B cell (primary cell): ENCODE measurements at regions of chr5 and their contacts with region 1.

Region 1: DNA sequence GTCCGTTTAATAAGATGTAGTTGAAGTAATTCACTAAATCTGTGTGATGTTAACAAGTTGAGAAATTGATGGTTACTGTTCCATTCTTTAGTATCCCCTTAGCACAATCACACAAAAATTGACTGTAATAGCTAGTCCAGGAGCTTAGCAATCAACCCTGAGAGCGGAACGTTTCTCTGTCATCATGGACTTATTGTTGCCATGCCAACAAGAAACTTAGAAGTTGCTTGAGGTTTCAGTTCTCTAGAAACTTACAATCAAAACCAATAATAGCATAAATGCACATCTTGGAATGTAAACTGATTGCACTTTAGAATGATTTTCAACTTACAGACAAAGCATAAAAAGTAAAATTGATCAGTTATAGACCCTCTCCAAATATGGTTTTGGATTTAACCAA is 125.4 kb upstream of the ANKH start:
- DNase-seq: peak; percentile 85
- ATAC-seq: peak; percentile 69
- H3K4me3 ChIP-seq: no peak overlapping the region
- H3K4me3 Mint-ChIP-seq: peak overlapping the region; percentile 24
- H3K27ac ChIP-seq: peak overlapping the region; percentile 37 to 59
- H3K27ac Mint-ChIP-seq: peak overlapping the region; percentile 71
- H3K4me1 ChIP-seq: peaks cover 35 to 39% of the 10 kb centered on the region in 2 donors
- H3K4me1 Mint-ChIP-seq: peaks cover 63% of the 10 kb centered on the region
- H3K27me3 ChIP-seq: no peaks in the 10 kb centered on the region
- H3K27me3 Mint-ChIP-seq: no peaks in the 10 kb centered on the region
- CTCF ChIP-seq: no peak

Region 2: DNA sequence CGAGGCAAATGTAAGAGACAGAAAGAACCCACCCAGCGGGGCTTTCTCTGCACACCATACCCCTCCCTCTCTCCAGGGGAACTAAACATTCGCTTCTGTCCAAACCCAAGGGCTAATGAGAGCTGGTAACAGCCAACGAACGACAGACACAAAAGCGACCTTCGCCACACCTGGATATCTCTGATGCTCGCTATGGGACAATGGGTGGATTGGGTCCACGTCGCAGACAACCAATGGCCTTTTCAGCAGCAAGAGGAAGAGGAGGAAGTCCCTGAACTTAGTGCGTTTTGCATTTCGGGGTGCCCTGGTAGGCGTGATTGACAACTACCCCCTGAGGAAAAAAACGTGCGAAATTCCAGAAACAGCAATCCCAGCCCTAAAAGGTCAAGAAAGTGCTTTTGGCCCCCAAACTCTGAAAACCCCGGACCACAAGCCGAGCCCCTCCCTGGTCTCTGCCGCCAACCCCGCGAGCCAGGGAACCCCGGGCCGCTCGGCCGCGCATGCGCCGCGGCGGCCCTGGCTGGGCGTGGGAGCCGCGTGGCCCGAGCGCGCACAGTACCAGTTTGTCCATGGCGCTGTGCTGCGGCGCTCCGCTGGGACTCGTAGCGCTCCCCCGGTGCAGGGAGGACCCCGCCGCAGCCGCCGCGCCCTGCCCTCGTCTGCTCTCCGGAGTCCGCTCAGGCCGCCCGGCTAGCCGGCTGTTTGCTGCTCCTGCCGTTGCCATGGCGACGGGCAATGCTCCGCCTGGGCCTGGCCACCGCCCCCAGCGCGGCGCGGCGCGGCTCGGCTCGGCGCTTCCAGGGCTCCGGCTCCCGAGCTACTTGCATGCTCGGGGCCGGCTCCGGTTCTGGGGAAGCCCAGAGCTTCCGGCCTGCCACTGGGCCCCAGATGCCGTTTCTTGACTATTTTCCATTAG is 985.6 kb before region 1 on chr5:
- CTCF ChIA-PET with region 1: no interaction called
- POLR2A ChIA-PET with region 1: no interaction called
- intact Hi-C with region 1: loop called (anchors 5 kb)
- DNase-seq: peak; percentile 85
- ATAC-seq: peak; percentile 87
- H3K4me3 ChIP-seq: peak overlapping the region; percentile 61 to 81 (median 72)
- H3K4me3 Mint-ChIP-seq: peak overlapping the region; percentile 91
- H3K27ac ChIP-seq: peak overlapping the region in 1 of 2 donors; percentile 14
- H3K27ac Mint-ChIP-seq: peak overlapping the region; percentile 60
- H3K4me1 ChIP-seq: peaks cover 5 to 8% of the 10 kb centered on the region in 2 donors
- H3K4me1 Mint-ChIP-seq: peaks cover 9% of the 10 kb centered on the region
- H3K27me3 ChIP-seq: peaks cover 0 to 16% (median 4%) of the 10 kb centered on the region in 4 experiments
- H3K27me3 Mint-ChIP-seq: peaks cover 28% of the 10 kb centered on the region
- CTCF ChIP-seq: no peak

Region 3: DNA sequence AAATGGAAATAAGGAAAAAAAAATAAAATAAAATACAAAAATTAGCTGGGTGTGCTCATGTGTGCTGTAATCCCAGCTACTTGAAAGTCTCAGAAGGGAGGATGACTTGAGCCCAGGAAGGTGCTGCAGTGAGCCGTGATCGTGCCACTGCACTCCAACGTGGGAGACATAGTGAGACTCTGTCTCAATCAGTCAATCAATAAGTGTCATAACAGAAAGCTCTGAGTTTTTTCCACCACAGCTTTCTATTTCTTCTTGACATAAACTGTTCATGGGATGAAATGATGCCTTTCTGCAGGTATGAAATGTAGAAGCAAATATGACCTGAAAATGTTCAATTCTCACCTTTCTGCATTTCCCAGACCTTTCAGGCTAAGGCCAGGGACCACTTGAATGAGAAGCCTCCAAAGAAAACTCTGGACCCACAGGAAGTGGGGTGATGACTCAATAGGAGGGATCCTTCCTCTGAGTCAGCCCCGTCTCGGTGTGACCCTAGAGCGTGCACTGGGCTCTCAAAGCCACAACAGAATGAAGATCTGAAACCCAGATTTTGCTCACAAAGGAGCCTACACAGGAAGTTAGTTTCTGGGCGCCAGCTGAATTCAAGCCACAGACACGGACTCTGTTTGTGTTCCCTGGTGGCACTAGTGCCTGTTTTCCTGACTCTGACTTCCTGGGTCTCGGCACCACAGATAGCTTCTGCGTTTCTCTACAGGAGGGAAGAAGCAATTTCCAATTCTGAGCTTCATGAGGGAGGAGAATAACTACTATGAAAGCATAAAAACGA is 187.4 kb before region 1 on chr5:
- CTCF ChIA-PET with region 1: interaction called, 3 read pairs
- POLR2A ChIA-PET with region 1: interaction called, 3 read pairs
- intact Hi-C with region 1: loop called (anchors 5 kb)
- DNase-seq: peak; percentile 75
- ATAC-seq: peak; percentile 93
- H3K4me3 ChIP-seq: peak overlapping the region in 3 of 5 experiments; percentile 22 to 51 (median 43)
- H3K4me3 Mint-ChIP-seq: peak overlapping the region; percentile 89
- H3K27ac ChIP-seq: peak overlapping the region; percentile 26 to 75
- H3K27ac Mint-ChIP-seq: peak overlapping the region; percentile 94
- H3K4me1 ChIP-seq: peaks cover 31 to 38% of the 10 kb centered on the region in 2 donors
- H3K4me1 Mint-ChIP-seq: peaks cover 43% of the 10 kb centered on the region
- H3K27me3 ChIP-seq: no peaks in the 10 kb centered on the region
- H3K27me3 Mint-ChIP-seq: no peaks in the 10 kb centered on the region
- CTCF ChIP-seq: no peak

Region 4: GRCh38 chr5:14871210-14872069 is 125.6 kb before region 1 on chr5 and contains the start of gene ANKH:
- CTCF ChIA-PET with region 1: interaction called, 3 read pairs
- POLR2A ChIA-PET with region 1: no interaction called
- intact Hi-C with region 1: loop called (anchors 1 kb)
- DNase-seq: peak; percentile 90
- ATAC-seq: peak; percentile 87
- H3K4me3 ChIP-seq: peak within 1 kb of the TSS; percentile 7 to 86 (median 64)
- H3K4me3 Mint-ChIP-seq: peak within 1 kb of the TSS; percentile 94
- H3K27ac ChIP-seq: peak within 1 kb of the TSS; percentile 24 to 74
- H3K27ac Mint-ChIP-seq: peak within 1 kb of the TSS; percentile 88
- H3K4me1 ChIP-seq: peaks cover 13 to 22% of the 10 kb centered on the region in 2 donors
- H3K4me1 Mint-ChIP-seq: peaks cover 25% of the 10 kb centered on the region
- H3K27me3 ChIP-seq: peaks cover 0 to 3% (median 0%) of the 10 kb centered on the region in 4 experiments
- H3K27me3 Mint-ChIP-seq: peaks cover 9% of the 10 kb centered on the region
- CTCF ChIP-seq: no peak
- total RNA-seq, gene ANKH: 71.1 and 71.3 TPM in 2 replicates

Region 5: GRCh38 chr5:14958196-14958595 is 38.8 kb before region 1 on chr5:
- CTCF ChIA-PET with region 1: interaction called, 226 read pairs
- POLR2A ChIA-PET with region 1: no interaction called
- intact Hi-C with region 1: no loop called
- DNase-seq: no peak
- ATAC-seq: no peak
- H3K4me3 ChIP-seq: no peak overlapping the region
- H3K4me3 Mint-ChIP-seq: no peak overlapping the region
- H3K27ac ChIP-seq: no peak overlapping the region
- H3K27ac Mint-ChIP-seq: no peak overlapping the region
- H3K4me1 ChIP-seq: no peaks in the 10 kb centered on the region
- H3K4me1 Mint-ChIP-seq: no peaks in the 10 kb centered on the region
- H3K27me3 ChIP-seq: no peaks in the 10 kb centered on the region
- H3K27me3 Mint-ChIP-seq: peaks cover 5% of the 10 kb centered on the region
- CTCF ChIP-seq: no peak

Region 6: GRCh38 chr5:16465544-16466466 is 1468.8 kb after region 1 on chr5 and contains the start of gene ZNF622:
- CTCF ChIA-PET with region 1: interaction called, 3 read pairs
- POLR2A ChIA-PET with region 1: no interaction called
- intact Hi-C with region 1: loop called (anchors 10 kb)
- DNase-seq: peak; percentile 92
- ATAC-seq: peak; percentile 96
- H3K4me3 ChIP-seq: peak within 1 kb of the TSS; percentile 90 to 98 (median 96)
- H3K4me3 Mint-ChIP-seq: peak within 1 kb of the TSS; percentile 96
- H3K27ac ChIP-seq: peak within 1 kb of the TSS; percentile 79 to 90
- H3K27ac Mint-ChIP-seq: peak within 1 kb of the TSS; percentile 94
- H3K4me1 ChIP-seq: peaks cover 41 to 43% of the 10 kb centered on the region in 2 donors
- H3K4me1 Mint-ChIP-seq: peaks cover 78% of the 10 kb centered on the region
- H3K27me3 ChIP-seq: no peaks in the 10 kb centered on the region
- H3K27me3 Mint-ChIP-seq: no peaks in the 10 kb centered on the region
- CTCF ChIP-seq: no peak
- total RNA-seq, gene ZNF622: 34.6 and 37.1 TPM in 2 replicates